K562 (cell line): ENCODE measurements at regions of chr16 and their contacts with region 1.

Region 1: DNA sequence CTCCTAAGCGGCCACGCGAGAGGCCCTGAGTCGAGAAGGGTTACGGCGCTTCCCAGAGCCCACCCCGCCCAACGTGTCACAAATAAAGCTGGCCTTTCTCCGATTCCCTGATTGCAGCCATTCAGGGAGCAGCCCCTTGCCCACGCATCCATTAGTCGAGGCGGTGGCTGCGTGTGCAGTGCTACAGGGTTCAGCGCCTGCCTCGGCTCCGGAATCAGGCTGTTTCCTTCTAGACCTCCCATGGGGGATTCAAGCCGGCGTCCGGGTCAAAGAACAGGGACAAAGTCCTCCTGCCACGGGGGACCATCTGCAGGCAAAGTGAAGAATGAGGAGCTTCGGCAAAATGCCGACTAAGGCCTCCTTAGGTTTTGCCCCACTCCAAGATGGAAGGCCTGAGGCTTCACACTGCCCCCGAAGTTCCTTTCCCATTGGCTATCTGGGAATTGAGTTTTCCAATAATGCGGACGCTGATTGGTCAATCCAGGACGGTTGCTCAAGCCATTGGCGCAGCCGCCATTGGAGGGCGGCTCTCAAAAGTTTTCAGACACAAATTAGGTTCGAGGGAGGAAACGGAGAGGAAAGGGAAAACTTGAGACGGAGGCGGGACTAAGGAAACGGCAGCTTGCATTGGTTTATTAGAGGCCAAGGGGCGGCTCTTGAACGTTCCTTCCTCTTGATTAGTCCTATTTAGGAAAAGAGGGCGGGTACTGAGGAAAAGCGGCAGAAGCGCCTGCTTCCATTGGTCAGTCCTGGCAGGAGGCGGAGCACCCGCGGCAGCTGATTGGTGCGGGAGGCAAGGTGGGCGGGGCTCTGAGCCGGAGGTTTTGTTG is 430 bp upstream of the KATNB1 start:
- DNase-seq: peak; percentile 98 to 100 (median 99)
- ATAC-seq: peak; percentile 94
- H3K4me3 ChIP-seq: peak overlapping the region; percentile 67
- H3K27ac ChIP-seq: peak overlapping the region; percentile 86
- H3K4me1 ChIP-seq: peaks cover 10 to 40% of the 10 kb centered on the region in 2 experiments; a peak in 3 of 5 replicates
- H3K27me3 ChIP-seq: no peaks in the 10 kb centered on the region
- CTCF ChIP-seq: no peak
- EP300 ChIP-seq: no peak
- POLR2A ChIP-seq: peak; percentile 86
- RAD21 ChIP-seq: no peak

Region 2: GRCh38 chr16:57694725-57695679 is 40.1 kb before region 1 on chr16 and contains the start of gene DRC7:
- CTCF ChIA-PET with region 1: no interaction called
- POLR2A ChIA-PET with region 1: interaction called, 4 read pairs
- in situ Hi-C with region 1: no loop called
- intact Hi-C with region 1: loop called (anchors 5 kb)
- DNase-seq: peak; percentile 81 to 85 (median 82)
- ATAC-seq: peak; percentile 81
- H3K4me3 ChIP-seq: peak within 1 kb of the TSS; percentile 31; the same call in 1 of the 2 replicates
- H3K27ac ChIP-seq: peak within 1 kb of the TSS; percentile 5; the same call in 1 of the 3 replicates
- H3K4me1 ChIP-seq: peaks cover 37 to 51% of the 10 kb centered on the region in 2 experiments; a peak in 4 of 5 replicates
- H3K27me3 ChIP-seq: no peaks in the 10 kb centered on the region
- CTCF ChIP-seq: no peak
- EP300 ChIP-seq: no peak
- POLR2A ChIP-seq: no peak
- RAD21 ChIP-seq: no peak
- polyA plus RNA-seq, gene DRC7: not detected

Region 3: DNA sequence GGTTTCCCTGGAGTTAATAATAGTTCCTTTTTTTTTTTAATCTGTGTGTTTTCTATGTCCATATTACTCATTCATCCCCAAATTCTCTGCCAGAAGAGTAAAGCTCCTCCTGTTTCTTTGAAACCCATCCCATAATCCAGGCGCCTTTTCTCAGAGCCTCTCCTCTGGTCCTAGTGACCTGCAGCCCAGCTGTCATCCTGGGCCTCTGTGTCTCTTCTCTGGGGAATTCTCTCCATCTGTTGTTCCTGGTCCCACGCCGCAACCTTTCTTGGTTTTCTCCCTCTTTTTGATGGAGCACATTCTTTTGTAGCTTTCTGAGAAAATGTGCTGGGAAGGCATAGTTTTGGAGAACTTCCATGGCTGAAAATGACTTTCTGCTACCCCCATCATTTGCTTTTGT is 10.6 kb after region 1 on chr16:
- CTCF ChIA-PET with region 1: no interaction called
- POLR2A ChIA-PET with region 1: interaction called, 10 read pairs
- in situ Hi-C with region 1: no loop called
- intact Hi-C with region 1: no loop called
- DNase-seq: no peak
- ATAC-seq: no peak
- H3K4me3 ChIP-seq: no peak overlapping the region
- H3K27ac ChIP-seq: no peak overlapping the region
- H3K4me1 ChIP-seq: peaks cover 10 to 21% of the 10 kb centered on the region in 2 experiments
- H3K27me3 ChIP-seq: no peaks in the 10 kb centered on the region
- CTCF ChIP-seq: no peak
- EP300 ChIP-seq: no peak
- POLR2A ChIP-seq: no peak
- RAD21 ChIP-seq: no peak